Activated B cell treated with CpG ODN at 0.5 μM for 24 hours (primary cell): ENCODE measurements at regions of chr2 and their contacts with region 1.

Region 1: GRCh38 chr2:227766373-227766883 is 20.7 kb downstream of the SCYGR8 start:
- DNase-seq: peak; percentile 40
- ATAC-seq: peak; percentile 90
- H3K4me3 Mint-ChIP-seq: no peak overlapping the region
- H3K27ac Mint-ChIP-seq: no peak overlapping the region
- H3K4me1 Mint-ChIP-seq: no peaks in the 10 kb centered on the region
- H3K27me3 Mint-ChIP-seq: peaks cover 2% of the 10 kb centered on the region
- CTCF ChIP-seq: peak; percentile 68

Region 2: GRCh38 chr2:227132986-227133385 is 633.4 kb before region 1 on chr2:
- CTCF ChIA-PET with region 1: interaction called, 22 read pairs
- POLR2A ChIA-PET with region 1: no interaction called
- intact Hi-C with region 1: loop called (anchors 1 kb)
- DNase-seq: no peak
- ATAC-seq: no peak
- H3K4me3 Mint-ChIP-seq: no peak overlapping the region
- H3K27ac Mint-ChIP-seq: no peak overlapping the region
- H3K4me1 Mint-ChIP-seq: no peaks in the 10 kb centered on the region
- H3K27me3 Mint-ChIP-seq: peaks cover 1% of the 10 kb centered on the region
- CTCF ChIP-seq: no peak

Region 3: GRCh38 chr2:227256605-227257004 is 509.8 kb before region 1 on chr2:
- CTCF ChIA-PET with region 1: no interaction called
- POLR2A ChIA-PET with region 1: no interaction called
- intact Hi-C with region 1: no loop called
- DNase-seq: no peak
- ATAC-seq: no peak
- H3K4me3 Mint-ChIP-seq: no peak overlapping the region
- H3K27ac Mint-ChIP-seq: no peak overlapping the region
- H3K4me1 Mint-ChIP-seq: no peaks in the 10 kb centered on the region
- H3K27me3 Mint-ChIP-seq: no peaks in the 10 kb centered on the region
- CTCF ChIP-seq: no peak

Region 4: GRCh38 chr2:227363756-227364155 is 402.7 kb before region 1 on chr2:
- CTCF ChIA-PET with region 1: interaction called, 13 read pairs
- POLR2A ChIA-PET with region 1: no interaction called
- intact Hi-C with region 1: loop called (anchors 1 kb)
- DNase-seq: no peak
- ATAC-seq: no peak
- H3K4me3 Mint-ChIP-seq: no peak overlapping the region
- H3K27ac Mint-ChIP-seq: no peak overlapping the region
- H3K4me1 Mint-ChIP-seq: peaks cover 4% of the 10 kb centered on the region
- H3K27me3 Mint-ChIP-seq: no peaks in the 10 kb centered on the region
- CTCF ChIP-seq: no peak

Region 5: DNA sequence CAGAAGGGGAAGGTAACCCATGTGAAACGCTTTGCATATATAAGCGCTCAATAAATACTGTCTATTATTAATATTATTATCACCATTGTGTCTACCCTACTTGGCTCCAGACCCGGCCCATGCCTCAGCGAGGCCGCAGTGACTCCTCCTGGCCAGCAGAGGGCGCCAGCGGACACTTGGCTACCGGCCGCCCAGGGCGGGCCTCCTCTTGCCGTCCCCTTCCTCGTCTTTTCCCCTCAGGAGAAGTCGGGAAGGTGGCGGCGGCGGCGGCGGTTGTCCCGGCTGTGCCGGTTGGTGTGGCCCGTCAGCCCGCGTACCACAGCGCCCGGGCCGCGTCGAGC is 294.5 kb before region 1 on chr2 and contains the start of gene AGFG1:
- CTCF ChIA-PET with region 1: interaction called, 5 read pairs
- POLR2A ChIA-PET with region 1: no interaction called
- intact Hi-C with region 1: loop called (anchors 2 kb)
- DNase-seq: peak; percentile 89
- ATAC-seq: peak; percentile 87
- H3K4me3 Mint-ChIP-seq: peak within 1 kb of the TSS; percentile 90
- H3K27ac Mint-ChIP-seq: peak within 1 kb of the TSS; percentile 78
- H3K4me1 Mint-ChIP-seq: peaks cover 36% of the 10 kb centered on the region
- H3K27me3 Mint-ChIP-seq: no peaks in the 10 kb centered on the region
- CTCF ChIP-seq: peak; percentile 77
- total RNA-seq, gene AGFG1: 108 and 125 TPM in 2 replicates

Region 6: GRCh38 chr2:227655454-227655853 is 111.0 kb before region 1 on chr2:
- CTCF ChIA-PET with region 1: interaction called, 17 read pairs
- POLR2A ChIA-PET with region 1: no interaction called
- intact Hi-C with region 1: loop called (anchors 1 kb)
- DNase-seq: no peak
- ATAC-seq: no peak
- H3K4me3 Mint-ChIP-seq: no peak overlapping the region
- H3K27ac Mint-ChIP-seq: no peak overlapping the region
- H3K4me1 Mint-ChIP-seq: no peaks in the 10 kb centered on the region
- H3K27me3 Mint-ChIP-seq: peaks cover 7% of the 10 kb centered on the region
- CTCF ChIP-seq: no peak

Region 7: DNA sequence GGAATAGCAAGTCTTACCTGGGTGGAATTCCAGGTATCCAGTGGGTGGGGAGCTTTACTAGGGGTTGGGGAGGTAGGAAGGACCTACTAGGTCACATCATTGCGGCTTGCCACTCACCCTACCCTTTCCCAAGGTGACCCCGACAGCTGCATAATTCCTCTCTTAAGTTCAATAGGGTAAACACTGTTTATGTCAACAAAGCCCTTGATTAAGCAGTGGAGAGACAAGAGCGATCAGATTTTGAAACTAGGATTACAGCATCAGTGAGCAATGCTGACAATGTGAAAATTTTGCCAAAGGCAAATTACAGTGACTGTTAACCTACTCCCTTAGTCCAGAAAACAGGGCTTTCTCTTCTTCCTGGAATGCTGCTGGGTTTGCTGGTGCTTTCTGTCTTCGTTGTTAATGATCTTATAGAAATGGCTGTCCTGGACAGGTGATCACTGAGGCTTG is 63.1 kb before region 1 on chr2:
- CTCF ChIA-PET with region 1: no interaction called
- POLR2A ChIA-PET with region 1: no interaction called
- intact Hi-C with region 1: no loop called
- DNase-seq: no peak
- ATAC-seq: no peak
- H3K4me3 Mint-ChIP-seq: no peak overlapping the region
- H3K27ac Mint-ChIP-seq: no peak overlapping the region
- H3K4me1 Mint-ChIP-seq: no peaks in the 10 kb centered on the region
- H3K27me3 Mint-ChIP-seq: peaks cover 11% of the 10 kb centered on the region
- CTCF ChIP-seq: no peak

Region 8: GRCh38 chr2:227816507-227817274 is 50.3 kb after region 1 on chr2:
- CTCF ChIA-PET with region 1: no interaction called
- POLR2A ChIA-PET with region 1: no interaction called
- intact Hi-C with region 1: no loop called
- DNase-seq: no peak
- ATAC-seq: no peak
- H3K4me3 Mint-ChIP-seq: no peak overlapping the region
- H3K27ac Mint-ChIP-seq: no peak overlapping the region
- H3K4me1 Mint-ChIP-seq: no peaks in the 10 kb centered on the region
- H3K27me3 Mint-ChIP-seq: peaks cover 28% of the 10 kb centered on the region
- CTCF ChIP-seq: no peak